Posterior vena cava (tissue), 2 donors: ENCODE measurements at regions of chr6 and their contacts with region 1.

Region 1: GRCh38 chr6:23343610-23344306 is 774.4 kb downstream of the HDGFL1 start:
- DNase-seq: no peak

Region 2: DNA sequence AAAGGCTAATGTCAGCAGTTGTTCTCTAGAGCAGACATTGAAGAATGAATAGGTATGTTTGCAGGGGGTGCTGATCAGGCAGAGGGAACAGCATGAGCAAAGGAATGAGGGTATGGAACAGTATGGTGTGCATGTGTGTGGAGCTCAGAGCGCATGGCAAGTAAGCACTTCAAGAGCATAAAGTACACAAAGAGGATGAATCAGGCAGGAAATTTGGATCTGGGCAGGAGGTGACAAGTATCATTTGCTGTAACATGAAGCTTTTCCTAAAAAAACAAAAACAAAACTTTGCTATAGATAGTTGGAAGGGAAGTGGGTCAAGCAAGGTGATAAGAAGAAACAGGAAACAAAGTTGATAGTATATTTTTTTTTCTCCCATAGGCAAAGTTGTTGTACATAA is 27.6 kb before region 1 on chr6:
- intact Hi-C with region 1: loop called in 1 of 2 experiments (anchors 1 kb)
- DNase-seq: no peak